Gastrocnemius medialis (tissue), 4 donors: ENCODE measurements at regions of chr12 and their contacts with region 1.

Region 1: GRCh38 chr12:110537605-110538409 is 35.7 kb downstream of the RAD9B start:
- DNase-seq: peak; percentile 88 to 98
- ATAC-seq: peak; percentile 81 to 86
- H3K4me3 ChIP-seq: peak overlapping the region in 1 of 4 donors; percentile 20
- H3K27ac ChIP-seq: peak overlapping the region; percentile 89 to 95 (median 94)
- H3K4me1 ChIP-seq: peaks cover 78 to 92% of the 10 kb centered on the region in 2 donors
- H3K27me3 ChIP-seq: no peaks in the 10 kb centered on the region
- CTCF ChIP-seq: peak in 1 of 5 experiments; percentile 14
- POLR2A ChIP-seq: peak; percentile 29 to 43

Region 2: DNA sequence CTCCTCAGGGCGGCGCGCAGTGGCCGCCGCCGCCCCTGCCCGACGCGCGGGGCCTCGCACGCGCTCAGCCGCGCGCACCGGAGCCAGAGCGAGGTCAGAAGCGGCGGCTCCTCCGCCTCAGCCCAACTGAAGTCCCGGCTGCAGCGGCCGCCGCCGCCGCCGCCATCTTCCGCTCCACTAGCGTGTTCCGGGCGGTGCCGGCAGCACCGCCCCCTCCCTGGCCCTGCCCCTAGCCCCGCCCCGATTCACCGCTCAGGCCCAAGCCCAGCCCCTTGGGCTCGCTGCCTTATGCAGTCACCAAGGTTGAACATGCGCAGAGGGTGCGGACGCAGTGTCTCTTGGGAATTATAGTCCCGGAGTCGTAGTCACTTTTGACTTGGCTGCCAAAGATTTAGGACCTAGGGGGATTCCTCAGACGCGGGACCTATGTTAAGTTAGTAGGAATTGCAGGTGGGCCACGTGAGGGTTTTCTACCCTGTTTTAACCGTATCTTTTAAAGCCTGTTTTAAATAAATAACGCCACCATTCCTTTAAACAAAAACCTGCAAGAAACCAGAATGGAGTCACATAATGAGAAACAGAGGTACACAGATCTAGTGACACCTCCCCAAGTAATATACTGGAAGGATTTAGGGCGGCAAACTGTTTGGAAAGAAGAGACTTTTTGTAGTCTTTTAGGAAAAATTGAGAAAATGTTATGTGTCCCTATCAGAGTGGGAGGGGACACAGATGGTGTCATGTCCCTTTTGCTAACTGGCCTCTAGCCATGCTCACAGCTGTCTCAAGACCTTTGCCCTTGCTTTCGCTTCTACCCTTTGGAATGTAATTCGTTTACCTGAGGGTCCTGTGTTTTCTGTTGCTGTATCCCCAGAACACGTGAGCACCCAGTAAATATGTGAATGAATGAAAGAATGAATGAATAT is 45.6 kb after region 1 on chr12 and contains the start of gene PPTC7:
- in situ Hi-C with region 1: no loop called
- intact Hi-C with region 1: loop called (anchors 1 kb)
- DNase-seq: peak; percentile 96 to 97
- ATAC-seq: peak; percentile 60 to 70
- H3K4me3 ChIP-seq: peak within 1 kb of the TSS; percentile 67 to 83 (median 78)
- H3K27ac ChIP-seq: peak within 1 kb of the TSS; percentile 91 to 98 (median 94)
- H3K4me1 ChIP-seq: peaks cover 56 to 58% of the 10 kb centered on the region in 2 donors
- H3K27me3 ChIP-seq: no peaks in the 10 kb centered on the region
- CTCF ChIP-seq: peak in 1 of 5 experiments; percentile 7
- POLR2A ChIP-seq: peak; percentile 98 to 99
- total RNA-seq, gene PPTC7: 27.6 to 85.8 (median 58.4) TPM